Panc1 (cell line): ENCODE measurements at regions of chr11 and their contacts with region 1.

Region 1: GRCh38 chr11:61332797-61333549 is at the starts of genes DDB1 and TKFC:
- DNase-seq: peak; percentile 35
- ATAC-seq: peak; percentile 97
- H3K4me3 ChIP-seq: peak within 1 kb of the TSS; percentile 92 to 98
- H3K27ac ChIP-seq: peak within 1 kb of the TSS; percentile 98
- H3K4me1 ChIP-seq: peaks cover 31% of the 10 kb centered on the region
- H3K27me3 ChIP-seq: no peaks in the 10 kb centered on the region
- CTCF ChIP-seq: no peak
- total RNA-seq, gene DDB1: 217 TPM
- total RNA-seq, gene TKFC: 79.6 TPM

Region 2: DNA sequence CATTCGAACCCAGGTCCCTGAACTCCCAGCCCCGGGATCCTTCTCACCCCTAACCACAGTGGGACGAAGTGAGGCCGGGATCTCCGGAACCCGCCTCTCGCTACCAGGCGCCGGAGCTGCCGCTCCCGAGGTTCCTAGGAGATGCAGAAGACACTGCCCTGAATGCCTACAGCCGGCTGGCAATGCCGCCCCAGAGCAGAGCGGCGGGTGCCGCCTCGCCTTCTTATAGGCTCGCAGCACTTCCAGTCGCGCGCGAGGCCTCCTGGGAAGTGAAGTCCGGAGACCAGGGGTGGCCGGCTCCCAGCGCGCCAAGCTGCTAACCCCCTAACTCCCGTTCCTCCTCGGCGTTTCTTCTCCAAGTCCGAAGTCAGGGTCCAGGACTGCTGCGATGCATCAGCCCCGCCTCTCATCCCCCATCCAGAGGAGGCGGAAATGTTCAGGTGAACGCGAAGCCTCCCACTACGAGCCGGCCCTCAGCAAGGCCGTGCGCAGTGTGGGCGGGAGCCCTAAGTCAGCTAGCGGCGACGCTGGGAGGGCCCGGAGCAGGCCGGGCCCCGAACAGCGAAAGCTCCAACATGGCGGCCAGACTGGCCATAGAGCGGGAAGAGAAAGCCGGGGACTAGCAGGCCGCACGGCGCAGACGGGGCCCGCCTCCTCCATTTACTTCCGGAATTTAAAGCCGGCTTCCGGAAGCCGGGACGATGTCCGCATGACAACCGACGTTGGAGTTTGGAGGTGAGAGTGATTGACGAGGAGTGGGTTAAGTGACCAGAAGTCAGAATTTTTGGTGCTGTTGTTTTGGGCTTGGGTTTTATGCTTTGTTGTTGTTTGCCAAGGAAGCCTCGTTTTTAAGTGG is 28.9 kb after region 1 on chr11 and contains the starts of genes CYB561A3 and TMEM138:
- CTCF ChIA-PET with region 1: interaction called, 13 read pairs
- POLR2A ChIA-PET with region 1: interaction called, 9 read pairs
- in situ Hi-C with region 1: no loop called
- intact Hi-C with region 1: no loop called
- DNase-seq: peak; percentile 77
- ATAC-seq: peak; percentile 97
- H3K4me3 ChIP-seq: peak within 1 kb of the TSS; percentile 94 to 95
- H3K27ac ChIP-seq: peak within 1 kb of the TSS; percentile 99
- H3K4me1 ChIP-seq: peaks cover 12% of the 10 kb centered on the region
- H3K27me3 ChIP-seq: no peaks in the 10 kb centered on the region
- CTCF ChIP-seq: no peak
- total RNA-seq, gene CYB561A3: 80.3 TPM
- total RNA-seq, gene TMEM138: 86.6 TPM

Region 3: GRCh38 chr11:61384271-61385242 is 51.6 kb after region 1 on chr11:
- CTCF ChIA-PET with region 1: interaction called, 50 read pairs
- POLR2A ChIA-PET with region 1: no interaction called
- in situ Hi-C with region 1: no loop called
- intact Hi-C with region 1: loop called (anchors 1 kb)
- DNase-seq: no peak
- ATAC-seq: no peak
- H3K4me3 ChIP-seq: no peak overlapping the region
- H3K27ac ChIP-seq: no peak overlapping the region
- H3K4me1 ChIP-seq: no peaks in the 10 kb centered on the region
- H3K27me3 ChIP-seq: no peaks in the 10 kb centered on the region
- CTCF ChIP-seq: no peak